ENCODE measurements at regions of chr2 and their contacts with region 1.

Region 1: DNA sequence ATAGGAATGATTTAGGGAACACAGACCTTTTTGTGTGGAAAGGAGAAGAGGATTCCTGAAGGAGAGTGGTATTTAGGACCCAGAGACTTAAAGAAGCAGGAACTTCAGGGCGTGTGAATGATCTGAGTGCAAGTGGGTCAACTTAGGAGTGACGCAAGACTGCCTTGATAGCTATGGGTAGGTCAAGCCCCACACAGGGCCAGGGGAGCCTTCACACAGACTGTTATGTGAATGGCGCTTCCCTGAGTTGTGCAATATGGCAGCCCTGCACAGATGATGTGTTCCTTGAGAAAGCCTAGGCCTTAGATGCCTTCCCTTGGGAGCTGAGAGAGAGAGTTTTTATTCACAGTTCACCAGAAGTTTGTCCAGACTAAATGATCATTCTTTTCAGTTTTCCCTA is 47.1 kb upstream of the IGFBP5 start:
- DNase-seq: peak; percentile 72
- ATAC-seq: peak; percentile 96

Region 2: DNA sequence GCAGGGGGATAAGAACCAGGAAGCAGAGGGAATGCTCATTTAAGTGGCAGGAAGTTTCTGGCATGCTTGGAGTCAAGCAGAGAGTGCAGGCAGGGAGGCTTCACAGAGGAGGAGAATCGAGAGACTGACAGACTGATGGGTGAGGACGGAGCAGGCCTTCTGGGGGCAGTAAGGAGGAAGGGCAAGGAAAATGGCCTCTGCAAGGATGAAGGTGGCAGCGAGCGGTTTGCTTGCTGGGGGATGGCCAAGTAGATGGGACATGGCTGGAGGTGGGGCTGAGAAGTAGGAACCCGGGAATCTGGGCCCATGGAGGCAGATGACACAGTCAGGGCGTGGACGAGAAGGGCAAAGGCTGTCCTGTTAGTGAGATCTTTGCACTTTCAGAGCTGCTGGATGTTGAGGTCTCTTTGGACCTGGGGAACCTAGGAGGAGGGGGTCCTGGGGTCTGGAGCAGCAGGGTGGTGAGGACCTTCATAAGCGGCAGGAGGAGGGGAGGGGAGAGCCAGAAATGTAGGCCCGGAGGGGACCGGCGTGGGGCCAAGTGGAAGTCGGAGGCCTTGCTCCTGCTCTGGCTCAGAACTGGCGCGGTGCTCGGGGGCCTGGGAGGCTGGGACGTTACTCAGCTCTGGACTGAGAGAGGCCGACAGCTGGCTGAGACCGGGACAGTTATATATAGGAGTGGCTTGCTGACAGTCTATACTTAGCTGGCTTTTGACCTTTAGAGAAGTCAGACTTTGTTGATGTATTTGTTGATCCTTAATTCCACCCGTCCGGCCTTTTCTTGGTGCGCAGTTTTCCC is 63.0 kb before region 1 on chr2:
- intact Hi-C with region 1: no loop called
- DNase-seq: no peak
- ATAC-seq: peak; percentile 7

Region 3: GRCh38 chr2:216727346-216728122 is 14.9 kb before region 1 on chr2:
- intact Hi-C with region 1: no loop called
- DNase-seq: no peak
- ATAC-seq: no peak

Region 4: GRCh38 chr2:216796115-216796840 is 53.9 kb after region 1 on chr2:
- intact Hi-C with region 1: loop called (anchors 2 kb)
- DNase-seq: no peak
- ATAC-seq: no peak

Measured in sciatic nerve (tissue), 2 donors.